ENCODE measurements at regions of chr7 and their contacts with region 1.

Region 1: DNA sequence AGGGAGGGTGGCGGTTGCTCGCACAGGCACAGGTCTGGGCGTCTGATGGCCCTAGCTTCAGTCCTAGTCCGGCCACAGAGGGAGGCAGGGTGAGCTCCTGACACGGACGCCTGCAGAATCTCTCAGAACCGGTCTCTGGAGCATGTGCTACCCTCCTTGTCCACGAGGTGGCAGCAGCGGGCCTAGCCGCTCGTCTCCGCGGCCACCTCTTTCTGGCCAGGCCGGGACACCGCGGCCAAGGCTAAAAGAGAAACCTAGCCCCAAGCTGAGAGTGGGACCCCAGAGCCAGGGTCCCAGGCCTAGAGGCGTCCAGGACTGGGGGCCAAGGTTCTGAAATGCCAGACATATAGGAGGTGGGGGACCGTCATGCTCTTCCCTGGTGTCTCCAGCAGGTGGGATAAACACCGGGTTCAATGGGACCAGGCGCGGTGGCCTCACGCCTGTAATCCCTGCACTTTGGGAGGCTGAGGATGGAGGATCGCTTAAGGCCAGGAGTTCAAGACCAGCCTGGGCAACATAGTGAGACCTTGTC is 3.2 kb upstream of the LAT2 start:
- DNase-seq: peak; percentile 85 to 88
- ATAC-seq: peak; percentile 64 to 82 (median 69)
- H3K4me3 ChIP-seq: peak overlapping the region; percentile 29
- H3K4me3 Mint-ChIP-seq: peak overlapping the region; percentile 75
- H3K27ac ChIP-seq: no peak overlapping the region
- H3K27ac Mint-ChIP-seq: peak overlapping the region; percentile 77 to 82
- H3K4me1 ChIP-seq: peaks cover 57% of the 10 kb centered on the region
- H3K4me1 Mint-ChIP-seq: peaks cover 22 to 40% of the 10 kb centered on the region in 2 donors
- H3K27me3 ChIP-seq: no peaks in the 10 kb centered on the region
- H3K27me3 Mint-ChIP-seq: peaks cover 0 to 4% of the 10 kb centered on the region in 2 donors
- CTCF ChIP-seq: peak; percentile 99

Region 2: DNA sequence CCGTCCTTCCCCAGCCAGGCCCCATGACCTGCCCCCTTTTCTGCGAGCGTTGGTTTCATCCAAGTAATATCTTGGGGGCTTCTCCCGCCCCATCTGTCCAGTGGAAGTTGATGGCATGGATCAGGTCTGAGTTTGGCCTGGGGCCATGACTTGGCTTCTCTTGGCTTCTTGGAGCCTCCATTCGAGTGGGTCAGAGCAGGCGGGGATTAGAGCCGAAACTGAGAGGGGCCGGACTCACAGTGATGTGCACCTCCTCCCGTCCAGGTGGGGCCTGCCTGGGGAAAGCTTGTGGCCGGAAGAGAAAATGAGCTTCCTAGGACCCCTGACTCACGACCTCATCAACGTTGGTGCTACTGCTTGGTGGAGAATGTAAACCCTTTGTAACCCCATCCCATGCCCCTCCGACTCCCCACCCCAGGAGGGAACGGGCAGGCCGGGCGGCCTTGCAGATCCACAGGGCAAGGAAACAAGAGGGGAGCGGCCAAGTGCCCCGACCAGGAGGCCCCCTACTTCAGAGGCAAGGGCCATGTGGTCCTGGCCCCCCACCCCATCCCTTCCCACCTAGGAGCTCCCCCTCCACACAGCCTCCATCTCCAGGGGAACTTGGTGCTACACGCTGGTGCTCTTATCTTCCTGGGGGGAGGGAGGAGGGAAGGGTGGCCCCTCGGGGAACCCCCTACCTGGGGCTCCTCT is 138.1 kb before region 1 on chr7:
- intact Hi-C with region 1: loop called (anchors 5 kb)
- DNase-seq: no peak
- ATAC-seq: no peak
- H3K4me3 ChIP-seq: no peak overlapping the region
- H3K4me3 Mint-ChIP-seq: no peak overlapping the region
- H3K27ac ChIP-seq: no peak overlapping the region
- H3K27ac Mint-ChIP-seq: peak overlapping the region in 1 of 2 donors; percentile 40
- H3K4me1 ChIP-seq: peaks cover 7% of the 10 kb centered on the region
- H3K4me1 Mint-ChIP-seq: no peaks in the 10 kb centered on the region
- H3K27me3 ChIP-seq: no peaks in the 10 kb centered on the region
- H3K27me3 Mint-ChIP-seq: no peaks in the 10 kb centered on the region
- CTCF ChIP-seq: no peak

Region 3: GRCh38 chr7:74231232-74231590 is 24.6 kb after region 1 on chr7:
- intact Hi-C with region 1: loop called (anchors 2 kb)
- DNase-seq: peak; percentile 47 to 57
- ATAC-seq: peak; percentile 84 to 87 (median 86)
- H3K4me3 ChIP-seq: no peak overlapping the region
- H3K4me3 Mint-ChIP-seq: peak overlapping the region; percentile 79
- H3K27ac ChIP-seq: peak overlapping the region; percentile 94
- H3K27ac Mint-ChIP-seq: peak overlapping the region; percentile 97
- H3K4me1 ChIP-seq: peaks cover 62% of the 10 kb centered on the region
- H3K4me1 Mint-ChIP-seq: peaks cover 25 to 44% of the 10 kb centered on the region in 2 donors
- H3K27me3 ChIP-seq: no peaks in the 10 kb centered on the region
- H3K27me3 Mint-ChIP-seq: no peaks in the 10 kb centered on the region
- CTCF ChIP-seq: no peak

Region 4: GRCh38 chr7:74254129-74254857 is 47.6 kb after region 1 on chr7 and contains the start of gene RFC2:
- intact Hi-C with region 1: loop called (anchors 1 kb)
- DNase-seq: peak; percentile 98 to 99
- ATAC-seq: peak; percentile 92 to 98 (median 95)
- H3K4me3 ChIP-seq: peak within 1 kb of the TSS; percentile 97
- H3K4me3 Mint-ChIP-seq: peak within 1 kb of the TSS; percentile 95
- H3K27ac ChIP-seq: peak within 1 kb of the TSS; percentile 90
- H3K27ac Mint-ChIP-seq: peak within 1 kb of the TSS; percentile 93 to 98
- H3K4me1 ChIP-seq: peaks cover 24% of the 10 kb centered on the region
- H3K4me1 Mint-ChIP-seq: peaks cover 18% of the 10 kb centered on the region in 2 donors
- H3K27me3 ChIP-seq: no peaks in the 10 kb centered on the region
- H3K27me3 Mint-ChIP-seq: no peaks in the 10 kb centered on the region
- CTCF ChIP-seq: no peak
- total RNA-seq, gene RFC2: 16.9 to 26.5 (median 20.5) TPM

Measured in natural killer cell (primary cell).